ENCODE measurements at regions of chr6 and their contacts with region 1.

Region 1: GRCh38 chr6:107550241-107550840 is 60.4 kb downstream of the SOBP start:
- DNase-seq: peak; percentile 87
- H3K4me3 ChIP-seq: peak overlapping the region; percentile 49
- H3K27ac ChIP-seq: peak overlapping the region; percentile 91
- H3K4me1 ChIP-seq: peaks cover 35% of the 10 kb centered on the region
- CTCF ChIP-seq: no peak

Region 2: GRCh38 chr6:106608062-106608668 is 942.2 kb before region 1 on chr6:
- CTCF ChIA-PET with region 1: no interaction called
- POLR2A ChIA-PET with region 1: no interaction called
- intact Hi-C with region 1: no loop called
- DNase-seq: peak; percentile 82
- H3K4me3 ChIP-seq: no peak overlapping the region
- H3K27ac ChIP-seq: no peak overlapping the region
- H3K4me1 ChIP-seq: peaks cover 51% of the 10 kb centered on the region
- CTCF ChIP-seq: peak; percentile 87

Region 3: DNA sequence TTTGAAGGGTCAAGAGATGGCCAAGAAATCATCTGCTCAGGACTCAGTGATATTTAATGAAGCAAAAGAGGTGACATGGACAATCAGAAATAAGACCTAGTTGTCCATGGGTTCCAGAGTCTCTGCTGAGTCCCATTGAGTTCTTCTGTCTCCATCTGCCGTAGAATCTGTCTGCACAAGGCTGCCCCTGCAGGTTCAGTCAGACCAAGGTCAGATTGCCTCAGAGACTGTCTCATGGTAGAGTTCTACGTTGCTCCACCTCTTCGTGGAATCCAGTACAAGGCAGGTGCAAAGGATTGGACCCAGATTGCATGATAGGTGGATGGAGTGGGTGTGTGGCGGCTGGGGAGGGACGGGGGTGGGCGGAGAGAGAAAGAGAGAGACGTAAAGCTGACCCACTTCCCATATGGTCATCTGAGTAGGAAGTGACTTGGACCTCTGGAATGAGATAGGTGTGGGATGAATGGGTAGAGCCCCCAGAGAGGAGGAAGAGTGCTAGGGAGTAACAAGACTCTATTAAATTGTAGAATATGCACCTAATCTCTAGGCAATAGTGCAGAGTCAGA is 14.9 kb after region 1 on chr6:
- CTCF ChIA-PET with region 1: no interaction called
- POLR2A ChIA-PET with region 1: interaction called, 11 read pairs
- intact Hi-C with region 1: no loop called
- DNase-seq: no peak
- H3K4me3 ChIP-seq: no peak overlapping the region
- H3K27ac ChIP-seq: no peak overlapping the region
- H3K4me1 ChIP-seq: no peaks in the 10 kb centered on the region
- CTCF ChIP-seq: no peak

Region 4: DNA sequence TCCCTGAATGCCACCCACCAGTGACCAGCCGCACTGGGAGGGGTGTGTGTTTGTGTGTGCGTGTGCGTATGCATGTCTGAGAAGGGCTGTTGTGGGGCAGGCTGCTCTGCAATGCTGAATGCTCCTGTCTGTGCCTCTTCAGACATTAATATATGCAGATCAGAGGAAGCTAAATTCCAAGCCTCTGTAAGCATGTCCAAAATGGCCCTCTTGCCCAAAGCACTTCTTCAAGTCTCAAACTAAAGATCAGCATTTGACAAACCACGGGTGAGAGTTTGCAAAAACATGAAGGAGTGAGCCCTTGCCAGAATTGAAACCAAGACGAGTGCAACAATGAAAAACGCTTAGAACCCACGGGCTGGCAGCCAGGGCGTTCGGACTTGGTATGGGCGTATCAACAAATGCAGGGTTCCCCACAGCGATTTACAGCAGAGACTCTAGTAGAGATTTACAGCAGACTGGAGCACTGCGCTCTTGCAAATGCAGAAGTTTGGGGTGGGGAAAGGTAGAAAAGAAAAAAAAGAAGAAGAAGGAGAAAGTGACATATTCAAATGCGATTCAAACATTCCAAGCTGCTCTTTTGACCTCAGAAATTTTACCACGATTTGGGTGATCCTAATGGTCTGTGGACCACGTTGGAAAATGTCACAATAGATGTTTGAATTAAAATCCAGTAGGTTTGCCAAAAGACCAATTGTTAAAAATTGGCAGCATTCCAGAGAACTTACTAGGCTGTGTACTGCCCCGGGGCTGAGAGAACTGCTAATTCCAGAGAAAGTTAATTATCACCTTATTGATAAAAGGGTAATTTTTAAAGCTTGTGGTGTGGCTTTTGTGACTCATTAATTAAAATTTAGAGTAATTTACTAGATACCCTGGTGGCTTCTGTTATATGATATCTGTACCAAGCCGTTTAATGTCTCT is 270.3 kb after region 1 on chr6:
- CTCF ChIA-PET with region 1: no interaction called
- POLR2A ChIA-PET with region 1: no interaction called
- intact Hi-C with region 1: no loop called
- DNase-seq: no peak
- H3K4me3 ChIP-seq: no peak overlapping the region
- H3K27ac ChIP-seq: no peak overlapping the region
- H3K4me1 ChIP-seq: peaks cover 28% of the 10 kb centered on the region
- CTCF ChIP-seq: no peak

Measured in OCI-LY7 (cell line).